ENCODE measurements at regions of chr6 and their contacts with region 1.

Region 1: DNA sequence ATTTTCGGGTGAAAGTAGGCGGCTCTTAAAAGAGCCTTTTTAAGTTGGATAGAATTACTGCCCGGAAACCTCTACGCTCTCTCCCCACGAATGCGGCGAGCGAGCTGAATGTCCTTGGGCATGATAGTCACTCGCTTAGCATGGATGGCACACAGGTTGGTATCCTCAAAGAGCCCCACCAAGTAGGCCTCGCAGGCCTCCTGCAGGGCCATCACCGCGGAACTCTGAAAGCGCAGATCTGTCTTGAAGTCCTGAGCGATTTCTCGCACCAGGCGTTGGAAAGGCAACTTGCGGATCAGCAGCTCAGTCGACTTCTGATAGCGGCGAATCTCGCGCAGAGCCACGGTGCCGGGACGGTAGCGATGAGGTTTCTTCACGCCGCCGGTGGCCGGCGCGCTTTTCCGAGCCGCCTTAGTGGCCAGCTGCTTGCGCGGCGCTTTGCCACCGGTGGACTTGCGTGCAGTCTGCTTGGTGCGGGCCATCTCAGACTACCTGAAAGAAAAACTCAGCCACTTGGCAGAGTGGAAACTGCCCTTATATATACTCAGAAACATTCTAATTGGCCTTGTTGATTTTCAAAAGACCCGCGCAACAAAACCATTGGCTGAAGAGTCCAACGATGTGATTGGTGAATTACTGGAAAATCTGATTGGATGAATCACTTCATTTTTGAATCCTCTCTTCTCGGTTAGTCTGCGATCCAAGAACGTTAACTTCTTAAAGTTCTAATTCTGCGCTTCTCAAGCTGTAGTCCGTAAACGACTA is 93.9 kb upstream of the BTN3A2 start:
- DNase-seq: peak; percentile 85 to 94 (median 92)
- H3K4me3 ChIP-seq: peak overlapping the region; percentile 66 to 96 (median 81)
- H3K27ac ChIP-seq: peak overlapping the region in 1 of 2 experiments; percentile 70
- H3K4me1 ChIP-seq: peaks cover 12 to 46% (median 39%) of the 10 kb centered on the region in 4 experiments
- H3K27me3 ChIP-seq: no peaks in the 10 kb centered on the region

Region 2: DNA sequence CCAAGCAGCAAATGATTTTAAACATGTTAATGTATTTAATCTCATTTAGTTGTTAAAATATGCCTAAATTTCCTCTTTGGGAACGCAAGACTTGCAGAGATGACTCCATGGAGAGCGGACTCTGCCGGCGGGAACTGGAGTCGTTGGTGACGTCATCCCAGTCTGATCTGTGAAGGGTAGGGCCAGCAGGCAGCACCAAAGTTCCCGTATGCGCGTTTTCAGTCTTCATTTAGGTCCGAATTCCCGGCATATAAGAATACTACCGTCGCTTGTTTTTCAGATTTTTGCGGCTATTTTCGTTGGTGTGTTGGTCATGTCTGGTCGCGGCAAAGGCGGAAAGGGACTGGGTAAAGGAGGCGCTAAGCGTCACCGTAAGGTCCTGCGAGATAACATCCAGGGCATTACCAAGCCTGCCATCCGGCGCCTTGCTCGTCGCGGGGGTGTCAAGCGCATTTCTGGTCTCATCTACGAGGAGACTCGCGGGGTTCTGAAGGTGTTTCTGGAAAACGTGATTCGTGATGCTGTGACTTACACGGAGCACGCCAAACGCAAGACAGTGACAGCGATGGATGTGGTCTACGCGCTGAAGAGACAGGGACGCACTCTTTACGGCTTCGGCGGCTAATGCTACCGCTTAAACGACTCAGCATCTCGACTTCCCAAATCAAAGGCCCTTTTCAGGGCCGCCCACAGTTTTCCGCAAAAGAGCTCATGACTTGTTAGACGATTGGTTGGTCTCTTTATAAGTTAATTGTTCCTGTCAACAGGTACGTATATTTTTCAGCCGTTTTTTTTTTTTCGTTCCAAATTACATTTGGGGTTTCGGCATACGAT is 66.5 kb before region 1 on chr6:
- CTCF ChIA-PET with region 1: interaction called, 11 read pairs
- POLR2A ChIA-PET with region 1: interaction called, 22 read pairs
- DNase-seq: peak; percentile 98 to 99 (median 99)
- H3K4me3 ChIP-seq: peak overlapping the region; percentile 75 to 97 (median 87)
- H3K27ac ChIP-seq: peak overlapping the region; percentile 94 to 97
- H3K4me1 ChIP-seq: peaks cover 19 to 50% (median 38%) of the 10 kb centered on the region in 4 experiments
- H3K27me3 ChIP-seq: no peaks in the 10 kb centered on the region

Region 3: GRCh38 chr6:26234421-26235296 is 36.4 kb before region 1 on chr6:
- CTCF ChIA-PET with region 1: interaction called, 15 read pairs
- POLR2A ChIA-PET with region 1: interaction called, 7 read pairs
- DNase-seq: peak; percentile 76 to 93 (median 93)
- H3K4me3 ChIP-seq: peak overlapping the region; percentile 41 to 88 (median 80)
- H3K27ac ChIP-seq: peak overlapping the region; percentile 79 to 91
- H3K4me1 ChIP-seq: peaks cover 7 to 28% (median 22%) of the 10 kb centered on the region in 4 experiments
- H3K27me3 ChIP-seq: no peaks in the 10 kb centered on the region

Region 4: DNA sequence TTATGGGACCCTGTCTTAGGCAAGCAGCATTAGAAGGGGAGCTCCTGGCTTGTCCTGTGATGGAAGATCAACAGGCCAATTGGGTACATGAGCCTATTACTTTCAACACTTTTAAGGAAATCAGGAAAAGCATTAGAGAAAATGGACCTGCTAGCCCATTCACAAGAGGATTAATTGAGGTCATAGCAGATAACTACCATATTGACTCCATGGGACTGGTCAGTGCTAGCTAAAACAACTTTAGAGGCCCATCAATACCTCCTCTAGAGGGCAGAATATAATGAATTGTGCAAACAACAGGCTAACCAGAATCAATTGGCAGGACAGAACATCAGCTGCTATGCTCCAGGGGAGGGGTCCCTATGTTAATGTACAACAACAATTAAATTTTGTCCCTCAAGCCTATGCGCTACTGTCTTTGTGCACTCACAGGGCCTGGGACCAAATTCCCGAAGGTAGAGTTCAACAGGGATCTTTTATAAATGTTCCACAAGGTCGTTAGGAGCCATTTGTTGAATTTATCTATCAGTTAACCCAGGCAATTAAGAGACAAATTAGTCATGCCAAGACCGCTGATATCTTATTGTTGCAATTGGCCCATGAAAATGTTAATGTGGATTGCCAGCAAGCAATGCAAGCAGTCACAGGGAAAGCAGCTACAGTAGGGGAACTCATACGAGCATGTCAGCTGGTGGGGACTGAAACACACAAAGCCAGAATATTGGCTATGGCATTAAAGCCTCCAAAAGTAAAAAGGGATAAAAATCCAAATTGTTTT is 12.7 kb before region 1 on chr6:
- CTCF ChIA-PET with region 1: interaction called, 13 read pairs
- POLR2A ChIA-PET with region 1: interaction called, 3 read pairs
- DNase-seq: peak in 1 of 3 donors; percentile 11
- H3K4me3 ChIP-seq: no peak overlapping the region
- H3K27ac ChIP-seq: no peak overlapping the region
- H3K4me1 ChIP-seq: peaks cover 0 to 7% (median 4%) of the 10 kb centered on the region in 4 experiments
- H3K27me3 ChIP-seq: no peaks in the 10 kb centered on the region